Activated CD4-positive, alpha-beta memory T cell treated with anti-CD3 and anti-CD28 coated beads for 36 hours (primary cell): ENCODE measurements at regions of chr1 and their contacts with region 1.

Region 1: DNA sequence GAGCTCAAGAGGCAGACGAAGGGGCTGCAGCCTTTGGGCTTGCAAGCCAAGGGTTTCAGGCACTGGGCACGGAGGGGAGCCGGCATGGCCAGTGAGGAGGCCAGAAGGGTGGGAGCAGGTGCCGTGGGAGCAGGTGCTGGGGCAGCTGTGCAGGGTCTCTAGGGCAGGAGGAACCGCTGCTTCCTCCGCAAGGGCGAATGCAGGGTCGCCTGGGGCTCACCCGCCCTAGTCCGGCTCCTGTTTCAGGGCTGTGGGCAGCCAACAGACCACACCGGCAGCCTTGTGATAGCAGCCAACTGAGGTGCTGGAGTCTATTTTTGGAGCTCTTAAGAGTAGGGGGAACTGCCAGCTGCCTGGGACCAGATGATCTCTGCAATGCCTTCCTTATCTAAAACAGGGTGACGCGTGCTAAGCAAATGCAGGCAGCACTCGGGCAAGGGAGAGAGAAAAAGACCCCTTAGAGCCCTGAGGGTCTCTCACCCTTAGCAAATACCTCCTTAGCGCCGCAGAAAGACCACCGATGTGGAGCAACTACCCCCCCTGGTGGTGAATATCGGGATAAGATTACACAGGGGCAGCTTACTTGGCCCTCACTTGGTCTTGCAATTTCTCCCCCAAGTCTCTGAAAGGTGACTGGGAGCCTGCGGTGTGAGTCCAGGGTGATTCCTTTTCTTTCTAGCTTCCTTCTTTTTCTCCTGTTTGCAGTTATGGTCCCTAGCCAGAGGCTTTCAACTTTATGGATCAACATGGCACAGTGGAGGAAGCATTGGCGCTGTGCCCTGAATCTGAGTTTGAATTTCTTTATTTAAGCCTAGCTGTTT is 20.7 kb upstream of the MAPKAPK2 start:
- DNase-seq: peak; percentile 78
- H3K4me3 Mint-ChIP-seq: no peak overlapping the region
- H3K27ac Mint-ChIP-seq: no peak overlapping the region
- H3K4me1 Mint-ChIP-seq: peaks cover 38% of the 10 kb centered on the region
- H3K27me3 Mint-ChIP-seq: peaks cover 9% of the 10 kb centered on the region

Region 2: GRCh38 chr1:206469933-206470691 is 193.9 kb before region 1 on chr1 and contains the start of gene IKBKE:
- CTCF ChIA-PET with region 1: interaction called, 19 read pairs
- POLR2A ChIA-PET with region 1: no interaction called
- intact Hi-C with region 1: no loop called
- DNase-seq: peak; percentile 74
- H3K4me3 Mint-ChIP-seq: peak within 1 kb of the TSS; percentile 85
- H3K27ac Mint-ChIP-seq: peak within 1 kb of the TSS; percentile 90
- H3K4me1 Mint-ChIP-seq: peaks cover 87% of the 10 kb centered on the region
- H3K27me3 Mint-ChIP-seq: no peaks in the 10 kb centered on the region
- total RNA-seq, gene IKBKE: 18.4 to 19.4 TPM

Region 3: DNA sequence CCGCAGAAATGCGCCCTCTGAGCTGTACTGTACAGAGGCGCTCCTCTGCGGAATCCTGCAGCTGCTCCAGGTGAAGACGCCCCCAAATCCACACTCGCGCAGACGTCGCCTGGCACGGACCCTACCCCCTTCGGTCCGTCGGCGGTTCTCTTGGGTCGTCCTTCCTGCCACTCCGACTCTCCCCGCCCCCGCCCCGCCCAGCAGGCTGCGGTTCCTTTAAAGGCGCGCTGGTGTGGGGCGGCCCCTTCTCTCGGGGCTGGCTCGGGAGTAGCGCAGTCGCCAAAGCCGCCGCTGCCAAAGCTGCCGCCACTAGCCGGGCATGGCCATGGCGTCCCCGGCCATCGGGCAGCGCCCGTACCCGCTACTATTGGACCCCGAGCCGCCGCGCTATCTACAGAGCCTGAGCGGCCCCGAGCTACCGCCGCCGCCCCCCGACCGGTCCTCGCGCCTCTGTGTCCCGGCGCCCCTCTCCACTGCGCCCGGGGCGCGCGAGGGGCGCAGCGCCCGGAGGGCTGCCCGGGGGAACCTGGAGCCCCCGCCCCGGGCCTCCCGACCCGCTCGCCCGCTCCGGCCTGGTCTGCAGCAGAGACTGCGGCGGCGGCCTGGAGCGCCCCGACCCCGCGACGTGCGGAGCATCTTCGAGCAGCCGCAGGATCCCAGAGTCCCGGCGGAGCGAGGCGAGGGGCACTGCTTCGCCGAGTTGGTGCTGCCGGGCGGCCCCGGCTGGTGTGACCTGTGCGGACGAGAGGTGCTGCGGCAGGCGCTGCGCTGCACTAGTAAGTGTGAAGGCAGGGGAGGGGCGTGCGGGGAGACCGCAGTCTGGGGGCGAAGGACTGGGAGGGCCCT is 156.5 kb before region 1 on chr1 and contains the start of gene RASSF5:
- CTCF ChIA-PET with region 1: interaction called, 11 read pairs
- POLR2A ChIA-PET with region 1: interaction called, 3 read pairs
- intact Hi-C with region 1: no loop called
- DNase-seq: peak; percentile 90
- H3K4me3 Mint-ChIP-seq: peak within 1 kb of the TSS; percentile 71
- H3K27ac Mint-ChIP-seq: peak within 1 kb of the TSS; percentile 30
- H3K4me1 Mint-ChIP-seq: peaks cover 47% of the 10 kb centered on the region
- H3K27me3 Mint-ChIP-seq: peaks cover 26% of the 10 kb centered on the region
- total RNA-seq, gene RASSF5: 203 TPM

Region 4: DNA sequence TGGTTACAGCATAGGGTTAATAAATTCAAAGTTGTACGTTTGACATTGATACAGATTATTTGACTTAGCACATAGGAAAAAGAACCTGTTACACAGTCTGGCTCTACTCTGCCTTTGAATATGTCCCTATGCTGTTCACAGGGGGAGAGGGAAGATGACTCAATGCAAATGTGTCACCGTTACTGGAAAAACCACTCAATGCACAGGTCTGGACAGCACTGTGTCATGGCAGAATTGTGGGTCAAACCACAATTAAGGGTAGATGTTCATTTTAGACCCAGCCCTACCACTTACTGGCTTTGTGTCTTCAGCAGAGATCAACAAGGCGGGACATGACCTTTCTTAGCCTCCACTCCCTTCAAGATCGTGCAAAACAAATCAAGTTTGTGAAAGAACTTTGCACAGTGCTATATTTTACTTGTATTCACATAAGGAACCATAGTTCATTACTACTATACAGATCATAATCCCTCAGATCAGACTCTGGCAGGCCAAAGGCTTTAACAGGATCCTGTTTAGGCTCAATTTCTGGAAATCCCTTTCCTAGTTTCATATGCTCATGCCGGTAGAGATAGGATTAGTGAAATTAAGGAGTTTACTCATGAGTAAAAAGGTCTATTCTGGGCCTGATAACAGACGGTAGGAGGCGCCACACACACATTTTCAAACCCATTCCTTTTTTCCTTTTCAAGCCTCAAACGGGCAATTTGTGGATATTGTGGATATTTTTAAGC is 73.8 kb before region 1 on chr1:
- CTCF ChIA-PET with region 1: interaction called, 36 read pairs
- POLR2A ChIA-PET with region 1: no interaction called
- intact Hi-C with region 1: loop called (anchors 1 kb)
- DNase-seq: peak; percentile 83
- H3K4me3 Mint-ChIP-seq: peak overlapping the region; percentile 50
- H3K27ac Mint-ChIP-seq: peak overlapping the region; percentile 99
- H3K4me1 Mint-ChIP-seq: peaks cover 78% of the 10 kb centered on the region
- H3K27me3 Mint-ChIP-seq: no peaks in the 10 kb centered on the region

Region 5: GRCh38 chr1:206674745-206675175 is 10.7 kb after region 1 on chr1:
- CTCF ChIA-PET with region 1: interaction called, 139 read pairs
- POLR2A ChIA-PET with region 1: interaction called, 3 read pairs
- intact Hi-C with region 1: no loop called
- DNase-seq: no peak
- H3K4me3 Mint-ChIP-seq: no peak overlapping the region
- H3K27ac Mint-ChIP-seq: no peak overlapping the region
- H3K4me1 Mint-ChIP-seq: peaks cover 11% of the 10 kb centered on the region
- H3K27me3 Mint-ChIP-seq: no peaks in the 10 kb centered on the region

Region 6: GRCh38 chr1:206706298-206706791 is 42.3 kb after region 1 on chr1:
- CTCF ChIA-PET with region 1: interaction called, 16 read pairs
- POLR2A ChIA-PET with region 1: no interaction called
- intact Hi-C with region 1: no loop called
- DNase-seq: peak; percentile 88
- H3K4me3 Mint-ChIP-seq: no peak overlapping the region
- H3K27ac Mint-ChIP-seq: peak overlapping the region; percentile 83
- H3K4me1 Mint-ChIP-seq: peaks cover 87% of the 10 kb centered on the region
- H3K27me3 Mint-ChIP-seq: no peaks in the 10 kb centered on the region

Region 7: DNA sequence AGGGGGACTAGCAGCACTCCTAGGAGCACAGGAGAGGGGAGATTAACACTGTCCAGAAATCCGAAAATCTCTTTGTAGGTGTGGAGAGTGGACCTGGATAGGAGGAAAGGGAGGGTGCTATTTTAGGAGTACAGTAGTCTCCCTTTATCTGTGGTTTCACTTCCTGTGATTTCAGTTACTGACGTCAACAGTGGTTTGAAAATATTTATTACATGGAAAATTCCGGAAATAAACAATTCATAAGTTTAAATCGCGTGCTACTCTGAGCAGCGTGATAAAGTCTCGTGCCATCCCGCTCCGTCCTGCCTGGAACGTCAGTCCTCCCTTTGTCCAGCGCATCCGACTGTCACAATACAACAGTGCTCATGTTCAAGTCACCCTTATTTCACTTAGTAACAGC is 226.6 kb after region 1 on chr1:
- CTCF ChIA-PET with region 1: no interaction called
- POLR2A ChIA-PET with region 1: no interaction called
- intact Hi-C with region 1: no loop called
- DNase-seq: no peak
- H3K4me3 Mint-ChIP-seq: no peak overlapping the region
- H3K27ac Mint-ChIP-seq: peak overlapping the region; percentile 69
- H3K4me1 Mint-ChIP-seq: peaks cover 53% of the 10 kb centered on the region
- H3K27me3 Mint-ChIP-seq: peaks cover 3% of the 10 kb centered on the region

Region 8: DNA sequence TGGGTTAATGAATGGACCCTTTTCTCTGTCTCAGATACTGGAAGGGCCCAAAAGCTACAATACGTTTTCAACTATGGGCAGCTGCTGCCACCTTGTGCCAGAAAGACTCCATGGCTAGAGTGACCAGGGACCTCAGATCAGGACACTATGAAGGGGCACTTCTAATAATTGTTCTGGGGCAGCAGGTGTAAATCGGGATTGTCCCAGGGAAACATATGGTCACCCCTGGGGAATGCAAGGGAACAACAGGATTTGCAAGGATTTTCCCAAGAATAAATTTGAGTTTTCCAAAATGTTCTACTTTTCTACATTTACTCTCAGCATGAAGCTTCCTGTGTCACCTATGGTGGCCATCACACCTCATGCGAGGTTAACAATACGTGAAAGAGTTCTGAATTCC is 318.2 kb after region 1 on chr1:
- CTCF ChIA-PET with region 1: interaction called, 21 read pairs
- POLR2A ChIA-PET with region 1: no interaction called
- intact Hi-C with region 1: no loop called
- DNase-seq: peak; percentile 72
- H3K4me3 Mint-ChIP-seq: no peak overlapping the region
- H3K27ac Mint-ChIP-seq: no peak overlapping the region
- H3K4me1 Mint-ChIP-seq: no peaks in the 10 kb centered on the region
- H3K27me3 Mint-ChIP-seq: peaks cover 15% of the 10 kb centered on the region